Left ventricle myocardium inferior (tissue), 1 donor: ENCODE measurements at regions of chr11 and their contacts with region 1.

Region 1: DNA sequence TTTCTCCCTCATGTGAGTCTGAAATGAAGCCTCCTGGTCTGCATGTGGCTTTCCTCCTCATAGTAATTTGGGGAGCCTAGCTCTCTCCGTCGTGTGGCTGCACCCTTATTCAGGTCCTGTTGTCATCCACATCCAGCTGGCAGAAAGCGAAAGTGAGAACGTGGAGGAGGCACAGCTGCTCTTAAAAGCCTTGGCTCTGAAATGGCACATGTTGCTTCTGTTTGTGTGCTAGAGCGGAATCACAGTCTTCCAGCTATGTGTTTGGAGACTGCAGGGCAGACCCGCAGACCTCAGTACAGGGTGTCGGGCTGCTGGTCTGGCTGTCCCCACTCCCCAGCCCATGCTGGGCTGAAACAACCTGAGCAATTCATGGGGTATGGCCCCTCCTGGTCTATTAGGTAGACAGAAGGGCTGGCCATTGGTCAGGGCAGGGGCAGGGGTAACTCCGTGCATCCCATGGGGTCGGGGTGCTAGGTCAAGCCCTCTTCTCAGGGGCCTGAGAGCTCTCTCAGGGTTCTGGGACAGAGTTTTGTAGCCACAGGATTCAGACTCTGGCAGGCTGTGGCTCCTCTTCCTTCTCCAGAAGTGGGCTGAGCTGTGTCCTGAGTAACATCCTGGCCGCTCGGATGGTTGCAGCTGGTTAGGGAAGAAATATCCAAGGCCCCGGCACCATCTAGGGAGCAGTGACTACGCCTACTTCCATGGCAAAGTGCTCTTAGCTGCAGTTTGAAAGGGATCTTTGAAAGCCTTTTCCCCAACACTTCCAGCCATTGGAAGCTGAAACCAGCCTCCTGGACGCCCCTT is 50.6 kb downstream of the C11orf96 start:
- DNase-seq: peak; percentile 56
- H3K4me3 ChIP-seq: peak overlapping the region; percentile 43
- H3K27ac ChIP-seq: peak overlapping the region; percentile 92
- H3K4me1 ChIP-seq: peaks cover 48% of the 10 kb centered on the region
- H3K27me3 ChIP-seq: no peaks in the 10 kb centered on the region
- CTCF ChIP-seq: no peak

Region 2: DNA sequence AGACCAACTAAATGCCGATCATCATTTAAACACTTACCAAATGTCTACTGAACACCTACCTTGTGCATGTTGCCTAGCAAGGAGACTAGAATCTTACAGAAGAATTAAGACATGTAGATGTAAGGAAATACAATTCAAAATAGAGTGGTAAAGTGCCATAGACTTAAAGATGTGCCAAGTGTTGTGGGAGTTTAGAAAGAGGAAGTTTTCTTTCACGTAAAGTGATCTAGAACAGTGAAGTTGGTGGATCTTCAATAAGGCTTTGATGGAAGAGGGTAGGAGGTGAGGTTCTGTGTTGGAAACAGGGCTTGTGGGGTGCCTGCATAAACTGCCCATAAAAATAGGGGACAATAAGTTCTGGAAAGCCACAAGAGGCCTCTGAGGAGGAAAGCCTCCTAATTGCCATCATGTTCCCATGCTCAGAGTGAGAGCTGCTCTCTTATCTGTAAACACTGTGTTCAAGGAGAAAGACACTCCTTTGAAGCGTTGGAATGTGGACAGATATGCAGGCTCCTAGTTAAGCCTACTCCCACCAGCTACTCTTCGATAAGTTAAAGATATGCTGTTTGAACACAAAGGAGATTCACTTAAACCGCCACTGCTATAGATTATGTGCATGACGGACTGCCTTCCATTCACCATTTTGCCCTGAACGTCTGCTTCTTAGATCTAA is 245.8 kb before region 1 on chr11:
- intact Hi-C with region 1: no loop called
- DNase-seq: no peak
- H3K4me3 ChIP-seq: no peak overlapping the region
- H3K27ac ChIP-seq: no peak overlapping the region
- H3K4me1 ChIP-seq: peaks cover 18% of the 10 kb centered on the region
- H3K27me3 ChIP-seq: no peaks in the 10 kb centered on the region
- CTCF ChIP-seq: no peak

Region 3: DNA sequence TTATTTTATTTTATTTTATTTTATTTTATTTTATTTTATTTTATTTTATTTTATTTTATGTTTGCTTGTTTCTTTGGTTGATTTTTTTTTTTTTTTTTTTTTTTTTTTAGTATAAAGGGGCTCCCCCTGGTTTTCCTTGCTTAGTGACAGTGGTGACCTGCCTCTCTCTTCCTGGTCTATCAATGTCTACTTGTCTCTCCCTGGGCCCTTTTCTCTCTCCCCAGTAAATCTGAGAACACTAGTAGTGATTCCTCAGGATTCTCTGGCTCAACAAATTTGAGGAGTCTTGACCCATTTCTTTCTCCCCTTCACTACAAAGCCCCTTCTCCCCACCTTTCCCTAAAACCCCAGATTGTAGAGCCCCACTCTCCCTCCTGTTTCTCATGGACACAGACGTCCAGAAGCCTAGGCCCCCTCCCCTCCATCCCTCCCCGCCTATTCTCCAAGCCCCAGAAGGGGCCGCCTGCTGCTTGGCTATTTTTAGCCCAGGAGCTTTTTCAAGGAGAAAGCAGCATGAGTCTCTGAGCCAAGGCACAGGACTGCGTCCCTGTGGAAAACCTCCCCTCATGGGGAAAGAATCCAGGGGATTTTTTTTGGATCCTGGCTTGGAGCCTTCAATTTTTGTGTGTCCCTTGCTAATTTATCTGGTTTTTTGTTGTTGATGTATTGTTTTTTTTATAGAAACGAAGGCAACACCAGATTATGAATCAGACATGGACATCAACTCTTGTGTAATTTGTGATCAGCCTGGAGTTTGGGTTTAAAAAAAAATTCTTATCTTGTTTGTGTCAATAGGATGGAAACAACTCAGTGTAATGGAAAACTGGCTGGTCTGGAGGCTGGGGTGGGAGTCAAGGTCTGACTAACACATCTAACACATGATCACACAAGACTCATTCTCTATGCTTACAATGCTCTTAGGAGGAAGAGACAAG is 37.2 kb after region 1 on chr11:
- intact Hi-C with region 1: loop called (anchors 5 kb)
- DNase-seq: peak; percentile 44
- H3K4me3 ChIP-seq: no peak overlapping the region
- H3K27ac ChIP-seq: peak overlapping the region; percentile 82
- H3K4me1 ChIP-seq: peaks cover 39% of the 10 kb centered on the region
- H3K27me3 ChIP-seq: no peaks in the 10 kb centered on the region
- CTCF ChIP-seq: no peak